ENCODE measurements at regions of chr16 and their contacts with region 1.

Region 1: GRCh38 chr16:65117811-65118448 is 3.9 kb downstream of the CDH11 start:
- DNase-seq: peak; percentile 87
- H3K4me3 ChIP-seq: no peak overlapping the region
- H3K27ac ChIP-seq: no peak overlapping the region
- H3K4me1 ChIP-seq: peaks cover 26% of the 10 kb centered on the region
- H3K27me3 ChIP-seq: no peaks in the 10 kb centered on the region
- CTCF ChIP-seq: peak; percentile 85 to 95
- POLR2A ChIP-seq: no peak

Region 2: DNA sequence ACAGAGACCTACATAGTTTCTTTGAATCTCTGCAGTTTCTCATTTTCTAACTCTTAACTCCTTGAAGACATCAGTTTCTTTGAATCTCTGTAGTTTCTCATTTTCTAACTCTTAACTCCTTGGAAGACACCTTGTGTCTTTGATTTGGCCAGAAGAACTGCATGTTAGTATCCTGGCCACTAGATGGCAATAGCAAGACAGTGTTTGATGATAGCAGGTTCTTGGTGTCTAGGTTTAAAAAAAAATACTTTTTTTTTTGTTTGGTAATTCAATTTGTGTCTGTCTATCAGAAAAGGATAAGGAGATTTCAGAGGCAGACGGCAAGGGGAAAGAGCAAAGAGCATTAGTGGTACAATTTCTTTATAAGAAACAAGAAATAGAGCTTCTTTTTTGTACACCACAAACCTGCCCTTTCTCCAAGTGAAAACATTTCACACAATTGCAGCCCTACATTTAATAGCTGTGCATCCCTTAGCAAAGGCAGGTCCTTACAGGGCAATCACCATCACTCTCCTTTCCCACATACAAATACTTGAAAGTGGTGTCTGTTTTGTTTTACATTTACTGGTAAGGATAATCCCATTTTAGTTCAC is 1756.8 kb before region 1 on chr16:
- CTCF ChIA-PET with region 1: no interaction called
- POLR2A ChIA-PET with region 1: no interaction called
- dilution Hi-C with region 1: no loop called
- intact Hi-C with region 1: loop called (anchors 2 kb)
- DNase-seq: peak; percentile 56
- H3K4me3 ChIP-seq: no peak overlapping the region
- H3K27ac ChIP-seq: no peak overlapping the region
- H3K4me1 ChIP-seq: no peaks in the 10 kb centered on the region
- H3K27me3 ChIP-seq: no peaks in the 10 kb centered on the region
- CTCF ChIP-seq: peak; percentile 56 to 71
- POLR2A ChIP-seq: no peak

Region 3: GRCh38 chr16:64089697-64090096 is 1028.2 kb before region 1 on chr16:
- CTCF ChIA-PET with region 1: interaction called, 4 read pairs
- POLR2A ChIA-PET with region 1: no interaction called
- dilution Hi-C with region 1: no loop called
- intact Hi-C with region 1: loop called (anchors 1 kb)
- DNase-seq: peak; percentile 55
- H3K4me3 ChIP-seq: no peak overlapping the region
- H3K27ac ChIP-seq: no peak overlapping the region
- H3K4me1 ChIP-seq: no peaks in the 10 kb centered on the region
- H3K27me3 ChIP-seq: no peaks in the 10 kb centered on the region
- CTCF ChIP-seq: peak; percentile 34 to 40
- POLR2A ChIP-seq: no peak

Region 4: DNA sequence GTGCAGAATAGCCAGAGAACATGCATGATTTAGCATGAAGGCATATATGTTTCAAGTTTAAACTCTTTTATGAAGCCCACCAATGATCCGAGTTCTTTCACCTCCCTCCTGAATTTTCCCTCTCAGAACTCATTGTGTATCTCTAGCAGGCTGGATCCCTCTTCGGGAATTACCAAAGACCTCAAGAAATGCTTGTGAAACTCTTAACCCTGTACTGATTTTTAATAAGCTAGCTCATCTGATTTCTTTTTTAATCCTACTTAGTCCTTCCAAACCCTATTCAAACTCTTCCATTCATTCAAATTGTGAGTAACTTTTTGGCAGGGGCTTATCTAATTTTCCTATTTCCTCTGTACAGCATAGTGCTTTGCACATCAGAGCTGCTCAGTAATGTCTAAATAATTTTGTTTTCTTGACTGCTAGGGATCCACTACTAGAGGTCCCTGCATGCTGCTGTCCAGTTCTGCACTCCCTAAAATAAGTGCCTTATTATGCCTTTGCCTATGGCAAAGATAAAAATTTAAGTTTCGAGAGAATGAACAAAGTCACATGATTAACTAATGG is 719.9 kb before region 1 on chr16:
- CTCF ChIA-PET with region 1: no interaction called
- POLR2A ChIA-PET with region 1: no interaction called
- dilution Hi-C with region 1: no loop called
- intact Hi-C with region 1: loop called (anchors 2 kb)
- DNase-seq: peak; percentile 75
- H3K4me3 ChIP-seq: peak overlapping the region in 1 of 3 experiments; percentile 5
- H3K27ac ChIP-seq: peak overlapping the region; percentile 78
- H3K4me1 ChIP-seq: peaks cover 44% of the 10 kb centered on the region
- H3K27me3 ChIP-seq: no peaks in the 10 kb centered on the region
- CTCF ChIP-seq: no peak
- POLR2A ChIP-seq: peak; percentile 22

Region 5: GRCh38 chr16:64964126-64964540 is 153.8 kb before region 1 on chr16:
- CTCF ChIA-PET with region 1: no interaction called
- POLR2A ChIA-PET with region 1: no interaction called
- dilution Hi-C with region 1: no loop called
- intact Hi-C with region 1: loop called (anchors 5 kb)
- DNase-seq: peak; percentile 85
- H3K4me3 ChIP-seq: no peak overlapping the region
- H3K27ac ChIP-seq: peak overlapping the region; percentile 94
- H3K4me1 ChIP-seq: peaks cover 20% of the 10 kb centered on the region
- H3K27me3 ChIP-seq: no peaks in the 10 kb centered on the region
- CTCF ChIP-seq: no peak
- POLR2A ChIP-seq: no peak

Region 6: DNA sequence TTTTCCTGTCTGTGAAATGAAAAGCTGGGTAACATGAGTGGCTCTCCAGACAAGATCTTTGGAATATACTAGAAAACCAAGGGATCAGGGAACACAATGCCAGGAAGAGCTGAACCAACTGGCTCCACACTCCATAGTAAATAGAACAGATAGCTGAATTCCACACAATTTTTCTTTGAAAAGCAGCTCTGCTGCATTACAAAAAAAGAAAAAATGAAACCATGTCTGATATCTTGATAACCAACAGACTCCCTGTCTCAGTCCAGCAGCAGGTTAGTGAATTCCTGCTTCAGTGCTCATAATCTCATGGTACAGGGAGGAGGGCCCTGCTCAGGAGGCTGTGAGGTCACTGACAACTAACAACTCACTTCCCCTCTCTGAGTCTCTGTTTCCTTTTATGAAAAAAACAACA is 93.2 kb before region 1 on chr16:
- CTCF ChIA-PET with region 1: no interaction called
- POLR2A ChIA-PET with region 1: no interaction called
- dilution Hi-C with region 1: no loop called
- intact Hi-C with region 1: loop called (anchors 1 kb)
- DNase-seq: peak; percentile 92
- H3K4me3 ChIP-seq: no peak overlapping the region
- H3K27ac ChIP-seq: peak overlapping the region; percentile 91
- H3K4me1 ChIP-seq: peaks cover 23% of the 10 kb centered on the region
- H3K27me3 ChIP-seq: no peaks in the 10 kb centered on the region
- CTCF ChIP-seq: no peak
- POLR2A ChIP-seq: peak; percentile 23

Region 7: DNA sequence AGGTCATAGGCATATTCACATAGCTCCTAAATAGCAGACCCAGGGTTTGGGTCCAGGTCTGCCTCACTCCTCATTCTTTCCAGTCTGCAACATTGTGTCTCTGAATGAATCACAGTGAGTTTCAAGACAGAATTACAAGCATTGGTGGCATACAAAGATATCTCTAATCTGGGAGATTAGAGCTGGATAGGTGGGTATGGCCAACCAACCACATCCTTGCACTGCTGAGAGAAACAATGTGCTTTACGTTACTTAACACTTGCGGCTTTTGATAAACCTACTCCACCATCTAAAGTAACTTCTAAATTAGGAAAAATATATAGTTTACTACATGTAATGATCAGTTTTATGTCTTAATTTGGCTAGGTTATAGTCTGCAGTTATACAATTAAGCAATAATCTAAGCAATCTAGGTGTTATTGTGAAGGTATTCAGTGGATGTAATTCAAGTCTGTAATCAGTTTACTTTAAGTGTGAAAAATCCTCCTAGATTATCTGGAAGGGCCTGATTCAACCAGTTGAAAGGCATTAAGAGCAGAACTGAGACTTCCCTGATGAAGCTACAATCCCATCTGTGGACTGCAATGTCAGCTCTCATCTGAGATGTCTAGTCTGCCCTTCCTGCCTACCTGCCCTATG is 22.7 kb before region 1 on chr16:
- CTCF ChIA-PET with region 1: no interaction called
- POLR2A ChIA-PET with region 1: no interaction called
- dilution Hi-C with region 1: no loop called
- intact Hi-C with region 1: no loop called
- DNase-seq: no peak
- H3K4me3 ChIP-seq: no peak overlapping the region
- H3K27ac ChIP-seq: no peak overlapping the region
- H3K4me1 ChIP-seq: no peaks in the 10 kb centered on the region
- H3K27me3 ChIP-seq: no peaks in the 10 kb centered on the region
- CTCF ChIP-seq: no peak
- POLR2A ChIP-seq: no peak

Region 8: GRCh38 chr16:66275775-66276428 is 1158.0 kb after region 1 on chr16:
- CTCF ChIA-PET with region 1: interaction called, 6 read pairs
- POLR2A ChIA-PET with region 1: no interaction called
- dilution Hi-C with region 1: no loop called
- intact Hi-C with region 1: loop called (anchors 1 kb)
- DNase-seq: peak; percentile 73
- H3K4me3 ChIP-seq: no peak overlapping the region
- H3K27ac ChIP-seq: no peak overlapping the region
- H3K4me1 ChIP-seq: peaks cover 4% of the 10 kb centered on the region
- H3K27me3 ChIP-seq: peaks cover 2 to 5% of the 10 kb centered on the region in 2 experiments
- CTCF ChIP-seq: peak; percentile 70 to 86
- POLR2A ChIP-seq: no peak